WTC11 (cell line): ENCODE measurements at regions of chr12 and their contacts with region 1.

Region 1: GRCh38 chr12:44015335-44015941 is 179.6 kb downstream of the TMEM117 start:
- DNase-seq: no peak
- ATAC-seq: peak; percentile 55; the same call in 1 of the 2 replicates
- H3K4me3 Mint-ChIP-seq: no peak overlapping the region
- H3K27ac Mint-ChIP-seq: no peak overlapping the region
- H3K4me1 Mint-ChIP-seq: peaks cover 16% of the 10 kb centered on the region
- H3K27me3 Mint-ChIP-seq: no peaks in the 10 kb centered on the region
- CTCF ChIP-seq: peak; percentile 57

Region 2: GRCh38 chr12:44000309-44000952 is 15.0 kb before region 1 on chr12:
- CTCF ChIA-PET with region 1: interaction called, 15 read pairs
- POLR2A ChIA-PET with region 1: interaction called, 3 read pairs
- DNase-seq: peak; percentile 67
- ATAC-seq: peak; percentile 100
- H3K4me3 Mint-ChIP-seq: no peak overlapping the region
- H3K27ac Mint-ChIP-seq: no peak overlapping the region
- H3K4me1 Mint-ChIP-seq: peaks cover 5% of the 10 kb centered on the region
- H3K27me3 Mint-ChIP-seq: no peaks in the 10 kb centered on the region
- CTCF ChIP-seq: peak; percentile 79